ENCODE measurements at regions of chr5 and their contacts with region 1.

Region 1: DNA sequence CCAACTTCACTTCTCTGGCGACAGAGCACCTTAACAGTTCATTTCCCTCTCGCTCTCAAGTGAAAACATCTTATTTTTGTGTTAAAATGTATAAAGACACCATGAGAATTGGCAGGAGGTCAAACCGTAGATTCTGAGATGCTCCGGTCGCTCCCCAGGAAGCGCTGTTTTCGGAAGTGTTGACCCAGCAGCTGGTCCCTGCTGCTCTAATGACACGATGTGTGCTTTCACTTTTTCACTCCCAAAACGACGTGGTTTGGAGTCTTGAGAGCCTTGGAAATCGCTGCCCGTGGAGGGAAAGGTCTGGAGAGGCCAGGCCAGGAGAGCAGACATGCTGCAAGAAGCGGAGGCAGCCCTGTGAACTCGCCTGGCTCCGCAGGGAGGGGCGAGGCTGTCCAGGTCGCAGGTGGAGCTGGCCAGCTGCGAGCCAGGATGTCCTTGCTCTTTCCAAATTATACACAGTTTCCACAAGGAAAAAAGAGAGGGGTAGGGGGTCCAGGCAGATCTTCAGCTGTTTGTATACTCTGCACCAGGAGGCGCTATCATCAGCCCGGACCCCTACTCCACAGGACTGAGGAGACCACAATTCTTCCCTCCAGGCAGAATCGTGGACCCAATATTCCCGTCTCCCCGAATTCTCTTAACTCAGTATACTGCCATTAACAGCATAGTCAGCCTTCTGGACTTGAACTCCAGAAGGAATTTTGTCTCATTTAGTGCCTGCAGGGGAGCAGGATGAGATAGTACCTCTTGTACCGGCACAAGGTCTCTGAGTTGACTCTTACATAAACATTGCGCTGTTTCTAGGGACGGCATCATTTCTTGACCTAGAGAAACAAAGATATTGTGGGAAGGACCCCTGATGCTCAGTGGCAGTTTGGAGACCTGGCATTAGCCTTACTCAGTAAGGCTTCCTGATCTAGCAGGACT is 248.6 kb upstream of the ANKRD55 start:
- DNase-seq: peak; percentile 70
- H3K4me3 ChIP-seq: peak overlapping the region; percentile 53 to 61
- H3K27ac ChIP-seq: peak overlapping the region; percentile 73 to 97; a peak in 3 of 4 replicates
- H3K4me1 ChIP-seq: peaks cover 11 to 35% of the 10 kb centered on the region in 2 experiments
- H3K27me3 ChIP-seq: no peaks in the 10 kb centered on the region
- CTCF ChIP-seq: peak; percentile 35
- EP300 ChIP-seq: no peak
- RAD21 ChIP-seq: no peak

Region 2: GRCh38 chr5:56649569-56649968 is 167.9 kb after region 1 on chr5:
- CTCF ChIA-PET with region 1: no interaction called
- POLR2A ChIA-PET with region 1: no interaction called
- DNase-seq: peak; percentile 62
- H3K4me3 ChIP-seq: no peak overlapping the region
- H3K27ac ChIP-seq: no peak overlapping the region
- H3K4me1 ChIP-seq: peaks cover 0 to 8% of the 10 kb centered on the region in 2 experiments; a peak in 1 of 4 replicates
- H3K27me3 ChIP-seq: no peaks in the 10 kb centered on the region; the same call in 1 of the 2 replicates
- CTCF ChIP-seq: no peak
- EP300 ChIP-seq: no peak
- RAD21 ChIP-seq: peak; percentile 34

Region 3: GRCh38 chr5:56712895-56713591 is 231.3 kb after region 1 on chr5:
- CTCF ChIA-PET with region 1: interaction called, 3 read pairs
- POLR2A ChIA-PET with region 1: interaction called, 12 read pairs
- DNase-seq: peak; percentile 75
- H3K4me3 ChIP-seq: no peak overlapping the region
- H3K27ac ChIP-seq: peak overlapping the region in 1 of 2 experiments; percentile 99; a peak in 2 of 4 replicates
- H3K4me1 ChIP-seq: peaks cover 0 to 37% of the 10 kb centered on the region in 2 experiments; a peak in 2 of 4 replicates
- H3K27me3 ChIP-seq: no peaks in the 10 kb centered on the region
- CTCF ChIP-seq: no peak
- EP300 ChIP-seq: peak in 1 of 2 experiments; percentile 97; a peak in 2 of 4 replicates
- RAD21 ChIP-seq: peak; percentile 44

Measured in SK-N-SH (cell line).